ENCODE measurements at regions of chr20 and their contacts with region 1.

Region 1: DNA sequence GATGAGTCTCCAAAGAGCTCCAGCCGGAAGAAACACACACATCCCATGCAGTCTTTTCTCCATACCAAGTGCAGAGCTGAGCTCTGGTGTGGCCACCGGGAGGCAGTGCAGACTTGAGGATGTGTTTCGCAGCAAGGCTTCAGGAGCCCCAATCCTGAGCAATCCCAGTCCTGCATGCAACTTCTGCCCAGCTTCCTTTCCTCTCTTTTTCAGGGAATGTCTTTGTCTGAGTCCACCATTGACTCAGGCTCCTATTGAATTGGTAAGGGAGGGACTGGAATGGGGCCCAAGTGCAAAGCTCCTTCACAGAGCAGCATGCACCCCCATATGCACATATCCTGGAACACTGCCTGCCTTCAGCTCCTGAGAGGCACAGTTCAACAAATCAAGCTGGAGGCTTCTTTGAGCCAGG is 50.5 kb upstream of the ASIP start:
- DNase-seq: peak in 10 of 14 experiments; percentile 6 to 55 (median 25)
- ATAC-seq: no peak
- H3K4me3 ChIP-seq: no peak overlapping the region
- H3K4me3 Mint-ChIP-seq: no peak overlapping the region
- H3K27ac ChIP-seq: no peak overlapping the region
- H3K27ac Mint-ChIP-seq: no peak overlapping the region
- H3K4me1 ChIP-seq: no peaks in the 10 kb centered on the region
- H3K4me1 Mint-ChIP-seq: no peaks in the 10 kb centered on the region
- H3K27me3 ChIP-seq: peaks cover 5 to 9% of the 10 kb centered on the region in 2 experiments
- H3K27me3 Mint-ChIP-seq: peaks cover 31% of the 10 kb centered on the region
- CTCF ChIP-seq: no peak

Region 2: DNA sequence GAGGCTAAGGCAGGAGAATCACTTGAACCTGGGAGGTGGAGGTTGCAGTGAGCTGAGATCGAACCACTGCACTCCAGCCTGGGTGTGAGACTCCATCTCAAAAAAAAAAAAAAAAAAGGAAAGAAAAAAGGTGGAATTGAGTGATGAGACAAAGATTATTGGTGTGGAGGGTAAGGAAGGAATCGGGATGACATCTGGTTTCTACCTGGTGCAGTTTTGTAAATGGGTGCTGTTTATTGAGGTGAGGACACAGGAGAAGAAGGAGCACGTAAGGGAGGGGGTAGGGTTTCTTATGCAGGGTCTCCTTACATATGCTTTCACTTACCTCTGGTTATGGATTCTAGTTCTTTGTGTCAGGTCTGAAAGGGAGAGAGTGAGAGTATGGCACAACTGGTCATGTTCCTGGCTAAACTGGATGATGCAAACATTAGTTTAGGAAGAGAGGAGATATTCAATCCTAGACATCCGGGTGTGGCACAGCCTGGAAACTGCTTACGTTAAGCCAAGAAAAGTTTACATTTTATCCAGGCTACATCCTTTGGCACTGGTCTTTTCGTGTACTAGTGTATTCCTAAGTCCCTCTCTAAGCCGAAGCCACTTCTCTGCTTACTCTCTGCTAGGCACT is 191.5 kb before region 1 on chr20:
- CTCF ChIA-PET with region 1: no interaction called
- POLR2A ChIA-PET with region 1: no interaction called
- intact Hi-C with region 1: no loop called
- DNase-seq: no peak
- ATAC-seq: no peak
- H3K4me3 ChIP-seq: no peak overlapping the region
- H3K4me3 Mint-ChIP-seq: peak overlapping the region; percentile 59
- H3K27ac ChIP-seq: no peak overlapping the region
- H3K27ac Mint-ChIP-seq: peak overlapping the region; percentile 60
- H3K4me1 ChIP-seq: peaks cover 59% of the 10 kb centered on the region
- H3K4me1 Mint-ChIP-seq: peaks cover 97% of the 10 kb centered on the region
- H3K27me3 ChIP-seq: no peaks in the 10 kb centered on the region
- H3K27me3 Mint-ChIP-seq: no peaks in the 10 kb centered on the region
- CTCF ChIP-seq: no peak

Region 3: GRCh38 chr20:34271961-34272360 is 81.3 kb after region 1 on chr20:
- CTCF ChIA-PET with region 1: no interaction called
- POLR2A ChIA-PET with region 1: no interaction called
- intact Hi-C with region 1: loop called in 1 of 2 experiments (anchors 5 kb)
- DNase-seq: no peak
- ATAC-seq: no peak
- H3K4me3 ChIP-seq: no peak overlapping the region
- H3K4me3 Mint-ChIP-seq: no peak overlapping the region
- H3K27ac ChIP-seq: no peak overlapping the region
- H3K27ac Mint-ChIP-seq: no peak overlapping the region
- H3K4me1 ChIP-seq: peaks cover 11% of the 10 kb centered on the region
- H3K4me1 Mint-ChIP-seq: no peaks in the 10 kb centered on the region
- H3K27me3 ChIP-seq: peaks cover 0 to 4% of the 10 kb centered on the region in 2 experiments
- H3K27me3 Mint-ChIP-seq: peaks cover 7% of the 10 kb centered on the region
- CTCF ChIP-seq: no peak

Region 4: DNA sequence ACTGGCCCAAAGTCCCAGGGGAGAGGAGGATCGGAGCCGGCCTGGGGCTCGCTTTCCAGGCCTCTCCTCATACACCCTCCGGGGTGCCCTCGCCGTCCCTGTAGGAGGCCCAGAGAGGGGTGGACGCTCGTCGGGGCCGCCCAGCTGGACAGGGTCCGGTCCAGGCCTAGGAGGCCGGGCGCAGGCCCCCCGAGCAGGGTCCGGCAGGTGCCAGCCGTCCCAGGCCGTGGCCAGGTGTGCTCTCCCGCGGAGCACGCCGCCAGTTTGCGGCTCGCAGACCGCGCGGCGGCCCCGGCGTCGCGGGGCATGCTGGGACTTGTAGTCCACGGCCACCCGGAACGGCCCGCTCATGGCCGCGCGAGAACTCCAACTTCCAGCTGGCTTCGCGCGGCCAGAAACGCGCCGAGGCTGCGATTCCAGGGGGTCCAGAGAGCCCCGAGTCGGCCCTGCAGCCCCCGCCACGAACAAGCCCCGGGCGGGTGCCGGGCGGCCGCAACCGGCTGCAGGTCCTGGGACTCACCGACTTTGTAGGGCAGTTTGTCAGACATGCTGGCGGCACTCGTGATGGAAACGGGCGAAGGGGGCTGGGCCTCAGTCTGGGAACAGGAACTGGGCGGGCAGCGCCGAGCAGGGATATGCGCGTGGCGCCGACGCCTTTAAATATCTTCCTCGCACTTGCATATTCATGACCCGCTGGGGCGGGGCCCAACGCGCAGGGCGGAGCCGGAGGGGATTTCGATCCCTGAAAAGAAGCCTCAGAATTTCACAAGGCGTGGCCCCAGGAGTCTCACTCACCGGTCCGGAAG is 112.2 kb after region 1 on chr20 and contains the start of gene AHCY:
- CTCF ChIA-PET with region 1: no interaction called
- POLR2A ChIA-PET with region 1: no interaction called
- intact Hi-C with region 1: no loop called
- DNase-seq: peak; percentile 78 to 96 (median 87)
- ATAC-seq: peak; percentile 94
- H3K4me3 ChIP-seq: peak within 1 kb of the TSS; percentile 82
- H3K4me3 Mint-ChIP-seq: peak within 1 kb of the TSS; percentile 98
- H3K27ac ChIP-seq: peak within 1 kb of the TSS; percentile 65 to 84
- H3K27ac Mint-ChIP-seq: peak within 1 kb of the TSS; percentile 91
- H3K4me1 ChIP-seq: peaks cover 17% of the 10 kb centered on the region
- H3K4me1 Mint-ChIP-seq: peaks cover 11% of the 10 kb centered on the region
- H3K27me3 ChIP-seq: no peaks in the 10 kb centered on the region
- H3K27me3 Mint-ChIP-seq: no peaks in the 10 kb centered on the region
- CTCF ChIP-seq: no peak
- total RNA-seq, gene AHCY: 16.7 to 16.9 TPM

Region 5: DNA sequence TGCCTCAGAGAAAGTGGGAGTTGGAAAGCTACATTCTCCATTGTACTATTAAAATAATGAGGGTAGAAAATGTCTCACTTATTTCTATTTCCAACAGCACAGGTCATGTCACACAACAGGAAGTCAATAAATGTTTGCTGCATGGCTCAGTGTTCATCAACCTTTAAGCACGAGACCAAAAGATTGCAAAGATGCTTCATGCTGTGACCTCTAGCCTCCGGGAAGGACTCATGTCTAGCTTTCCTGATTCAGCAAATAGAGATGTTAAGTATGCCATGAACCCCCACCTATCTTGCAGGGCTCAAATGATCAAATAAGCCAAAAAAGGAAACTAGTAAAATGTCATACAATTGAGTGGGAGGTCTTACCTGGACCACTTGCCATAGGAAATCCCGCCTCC is 577.4 kb after region 1 on chr20:
- CTCF ChIA-PET with region 1: no interaction called
- POLR2A ChIA-PET with region 1: no interaction called
- intact Hi-C with region 1: loop called in 1 of 2 experiments (anchors 2 kb)
- DNase-seq: no peak
- ATAC-seq: no peak
- H3K4me3 ChIP-seq: no peak overlapping the region
- H3K4me3 Mint-ChIP-seq: no peak overlapping the region
- H3K27ac ChIP-seq: no peak overlapping the region
- H3K27ac Mint-ChIP-seq: no peak overlapping the region
- H3K4me1 ChIP-seq: no peaks in the 10 kb centered on the region
- H3K4me1 Mint-ChIP-seq: no peaks in the 10 kb centered on the region
- H3K27me3 ChIP-seq: no peaks in the 10 kb centered on the region
- H3K27me3 Mint-ChIP-seq: no peaks in the 10 kb centered on the region
- CTCF ChIP-seq: no peak